ENCODE measurements at regions of chr1 and their contacts with region 1.

Region 1: DNA sequence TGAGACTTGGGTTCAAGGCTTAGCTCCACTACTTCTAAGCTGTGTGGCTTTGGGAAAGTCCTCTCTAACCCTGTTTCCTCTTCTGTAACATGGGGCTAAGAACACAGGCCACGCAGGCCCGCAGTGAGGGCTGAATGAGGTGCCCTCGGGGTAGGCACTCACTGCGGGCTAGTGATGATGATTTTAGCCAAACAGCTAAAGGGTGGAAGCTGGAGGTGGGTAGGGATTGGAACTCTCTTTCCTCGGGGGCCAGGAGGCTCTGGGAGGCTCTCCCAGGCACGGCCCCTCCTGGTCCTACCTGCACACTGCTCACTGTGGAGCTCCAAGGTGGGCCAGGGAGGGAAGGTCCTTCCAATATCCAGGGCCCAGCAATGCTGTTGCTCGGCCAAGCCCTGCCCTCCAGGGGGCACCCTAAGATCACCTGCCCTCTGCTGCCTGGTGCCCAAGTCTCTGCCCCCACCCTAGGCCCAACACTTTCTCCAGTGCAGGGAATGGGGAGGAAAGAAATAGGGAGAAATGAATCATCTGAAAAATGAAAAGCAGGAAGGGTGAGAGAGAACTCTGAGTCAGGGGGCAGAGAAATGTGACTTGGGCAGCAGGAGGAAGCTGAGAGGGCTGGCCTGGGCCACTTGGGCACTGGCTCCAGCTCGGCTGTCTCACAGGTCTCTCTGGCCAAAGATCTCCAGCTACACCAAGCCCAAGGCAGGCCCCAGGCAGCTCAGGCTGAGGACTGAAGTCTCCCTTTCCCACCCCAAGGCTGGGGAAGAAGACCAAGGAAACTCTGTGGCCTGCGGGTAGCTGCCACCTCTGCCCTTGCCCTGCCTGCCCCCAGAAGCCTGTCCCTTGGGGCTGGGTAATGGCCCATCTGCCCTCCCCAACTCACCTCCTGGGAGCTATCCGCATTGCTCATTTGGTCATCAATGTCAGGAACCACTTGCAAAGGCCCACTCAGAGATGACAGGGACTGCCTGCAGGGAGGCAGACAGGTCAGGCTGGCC is 19.3 kb upstream of the EVA1B start:
- DNase-seq: peak in 31 of 35 experiments; percentile 16 to 79 (median 54)
- ATAC-seq: peak; percentile 76 to 94 (median 82)
- H3K4me3 ChIP-seq: no peak overlapping the region
- H3K4me3 Mint-ChIP-seq: no peak overlapping the region
- H3K27ac ChIP-seq: no peak overlapping the region
- H3K27ac Mint-ChIP-seq: peak overlapping the region; percentile 28 to 49
- H3K4me1 ChIP-seq: peaks cover 0 to 20% of the 10 kb centered on the region in 2 experiments
- H3K4me1 Mint-ChIP-seq: peaks cover 21 to 33% (median 29%) of the 10 kb centered on the region in 3 donors
- H3K27me3 ChIP-seq: no peaks in the 10 kb centered on the region
- H3K27me3 Mint-ChIP-seq: no peaks in the 10 kb centered on the region

Region 2: GRCh38 chr1:36420836-36421664 is 78.3 kb after region 1 on chr1:
- CTCF ChIA-PET with region 1: interaction called, 7 to 12 read pairs
- POLR2A ChIA-PET with region 1: no interaction called
- DNase-seq: peak; percentile 65 to 94 (median 84)
- ATAC-seq: peak; percentile 96 to 99 (median 98)
- H3K4me3 ChIP-seq: peak overlapping the region in 1 of 2 donors; percentile 1
- H3K4me3 Mint-ChIP-seq: peak overlapping the region; percentile 40 to 69 (median 67)
- H3K27ac ChIP-seq: peak overlapping the region; percentile 59
- H3K27ac Mint-ChIP-seq: peak overlapping the region; percentile 95 to 98
- H3K4me1 ChIP-seq: peaks cover 14 to 18% of the 10 kb centered on the region in 2 experiments
- H3K4me1 Mint-ChIP-seq: peaks cover 25 to 29% (median 26%) of the 10 kb centered on the region in 3 donors
- H3K27me3 ChIP-seq: no peaks in the 10 kb centered on the region
- H3K27me3 Mint-ChIP-seq: no peaks in the 10 kb centered on the region

Region 3: GRCh38 chr1:36718498-36718897 is 375.7 kb after region 1 on chr1:
- CTCF ChIA-PET with region 1: no interaction called
- POLR2A ChIA-PET with region 1: no interaction called
- DNase-seq: no peak
- ATAC-seq: no peak
- H3K4me3 ChIP-seq: no peak overlapping the region
- H3K4me3 Mint-ChIP-seq: no peak overlapping the region
- H3K27ac ChIP-seq: no peak overlapping the region
- H3K27ac Mint-ChIP-seq: no peak overlapping the region
- H3K4me1 ChIP-seq: no peaks in the 10 kb centered on the region
- H3K4me1 Mint-ChIP-seq: no peaks in the 10 kb centered on the region
- H3K27me3 ChIP-seq: peaks cover 0 to 35% of the 10 kb centered on the region in 2 experiments
- H3K27me3 Mint-ChIP-seq: peaks cover 35 to 40% of the 10 kb centered on the region in 2 donors